Heart right ventricle (tissue), 16 donors: ENCODE measurements at regions of chrX and their contacts with region 1.

Region 1: DNA sequence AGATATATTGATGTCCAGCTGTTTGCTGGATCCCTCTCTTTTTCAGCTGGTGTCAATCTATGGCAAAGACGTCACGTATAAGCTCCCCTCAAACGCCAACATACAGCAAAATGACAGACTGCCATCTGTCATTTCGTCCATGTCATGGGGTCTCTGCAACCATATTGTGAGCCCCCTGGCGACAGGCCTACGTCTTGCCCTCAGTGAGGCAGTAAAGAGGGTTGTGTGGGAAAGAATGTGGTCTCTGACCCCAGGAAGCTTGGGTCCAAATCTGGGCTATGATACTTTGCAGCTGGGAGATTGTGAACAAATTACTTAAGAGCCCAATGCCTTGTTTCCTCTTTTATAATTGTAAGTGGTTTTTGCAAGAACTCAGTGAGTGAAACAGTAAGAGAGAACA is 7.4 kb downstream of the SUPT20HL2 start:
- DNase-seq: no peak
- ATAC-seq: no peak
- H3K4me3 ChIP-seq: no peak overlapping the region
- H3K27ac ChIP-seq: no peak overlapping the region
- H3K4me1 ChIP-seq: peaks cover 0 to 25% (median 0%) of the 10 kb centered on the region in 9 donors
- H3K27me3 ChIP-seq: peaks cover 0 to 76% (median 0%) of the 10 kb centered on the region in 7 donors
- CTCF ChIP-seq: no peak

Region 2: DNA sequence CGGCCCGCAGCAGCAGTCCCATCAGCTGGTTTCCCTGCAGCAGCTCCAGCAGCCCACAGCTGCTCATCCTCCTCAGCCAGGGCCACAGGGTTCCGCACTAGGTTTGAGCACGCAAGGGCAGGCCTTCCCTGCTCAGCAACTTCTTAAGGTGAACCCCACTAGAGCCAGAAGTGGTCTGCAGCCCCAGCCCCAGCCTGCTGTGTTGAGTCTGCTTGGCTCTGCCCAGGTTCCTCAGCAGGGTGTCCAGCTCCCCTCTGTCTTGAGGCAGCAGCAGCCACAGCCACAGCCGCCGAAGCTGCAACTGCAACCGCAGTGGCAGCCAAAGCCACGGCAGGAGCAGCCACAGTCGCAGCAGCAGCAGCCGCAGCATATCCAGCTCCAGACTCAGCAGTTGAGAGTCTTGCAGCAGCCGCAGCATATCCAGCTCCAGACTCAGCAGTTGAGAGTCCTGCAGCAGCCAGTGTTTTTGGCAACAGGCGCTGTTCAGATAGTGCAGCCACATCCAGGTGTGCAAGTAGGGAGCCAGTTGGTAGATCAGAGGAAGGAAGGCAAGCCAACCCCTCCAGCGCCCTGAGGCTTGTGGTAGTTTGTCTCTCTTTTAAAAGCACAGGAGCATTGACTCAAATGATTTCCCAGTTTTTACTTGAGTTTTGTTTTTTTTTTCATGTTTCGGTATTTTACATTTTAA is 58.6 kb after region 1 on chrX:
- intact Hi-C with region 1: loop called in 1 of 10 experiments (anchors 10 kb)
- DNase-seq: no peak
- ATAC-seq: peak in 1 of 8 donors; percentile 19
- H3K4me3 ChIP-seq: peak overlapping the region in 2 of 10 donors; percentile 1 to 12
- H3K27ac ChIP-seq: no peak overlapping the region
- H3K4me1 ChIP-seq: no peaks in the 10 kb centered on the region
- H3K27me3 ChIP-seq: peaks cover 0 to 21% (median 0%) of the 10 kb centered on the region in 7 donors
- CTCF ChIP-seq: no peak